Activated CD4-positive, alpha-beta T cell treated with anti-CD3 and anti-CD28 coated beads, Interleukin-2, amount 10 ng/mL, durations not matched to agents 24 days and 14 days (primary cell): ENCODE measurements at regions of chr10 and their contacts with region 1.

Region 1: GRCh38 chr10:31031558-31032257 is at the start of gene ZNF438:
- DNase-seq: peak; percentile 98
- H3K4me3 Mint-ChIP-seq: peak within 1 kb of the TSS; percentile 89
- H3K27ac Mint-ChIP-seq: peak within 1 kb of the TSS; percentile 98
- H3K4me1 Mint-ChIP-seq: peaks cover 9% of the 10 kb centered on the region
- H3K27me3 Mint-ChIP-seq: no peaks in the 10 kb centered on the region
- total RNA-seq, gene ZNF438: 2.4 and 3.2 TPM in 2 replicates

Region 2: DNA sequence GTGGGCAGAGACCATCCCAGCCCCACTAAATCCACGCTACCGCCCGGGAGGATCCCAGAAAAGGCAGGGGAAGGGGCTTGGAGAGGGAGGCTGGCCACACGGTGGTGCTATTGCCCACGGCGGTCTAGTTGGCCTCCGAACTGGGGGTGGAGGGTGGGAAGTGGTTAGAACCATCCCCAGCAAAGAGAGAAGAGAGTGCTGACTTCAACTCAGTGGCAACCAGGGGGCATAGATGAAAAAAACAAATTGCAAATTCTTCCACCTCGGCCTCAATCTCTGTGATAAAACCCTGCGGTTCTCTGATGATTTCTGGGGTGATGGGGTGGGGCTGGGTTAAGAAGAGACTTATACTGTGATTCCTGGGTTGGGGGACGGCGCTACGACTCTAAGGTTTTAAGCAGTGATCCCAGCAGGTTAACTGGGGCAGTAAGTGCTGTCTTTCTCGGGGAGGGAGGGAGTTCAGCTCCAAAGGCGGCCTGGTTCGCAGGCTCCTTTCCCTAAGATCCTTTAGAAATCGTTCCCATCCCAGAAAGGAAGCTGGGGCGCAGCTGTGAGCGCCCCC is 247.7 kb before region 1 on chr10:
- intact Hi-C with region 1: loop called (anchors 2 kb)
- DNase-seq: peak; percentile 94
- H3K4me3 Mint-ChIP-seq: peak overlapping the region; percentile 84
- H3K27ac Mint-ChIP-seq: peak overlapping the region; percentile 86
- H3K4me1 Mint-ChIP-seq: peaks cover 30% of the 10 kb centered on the region
- H3K27me3 Mint-ChIP-seq: peaks cover 2% of the 10 kb centered on the region

Region 3: DNA sequence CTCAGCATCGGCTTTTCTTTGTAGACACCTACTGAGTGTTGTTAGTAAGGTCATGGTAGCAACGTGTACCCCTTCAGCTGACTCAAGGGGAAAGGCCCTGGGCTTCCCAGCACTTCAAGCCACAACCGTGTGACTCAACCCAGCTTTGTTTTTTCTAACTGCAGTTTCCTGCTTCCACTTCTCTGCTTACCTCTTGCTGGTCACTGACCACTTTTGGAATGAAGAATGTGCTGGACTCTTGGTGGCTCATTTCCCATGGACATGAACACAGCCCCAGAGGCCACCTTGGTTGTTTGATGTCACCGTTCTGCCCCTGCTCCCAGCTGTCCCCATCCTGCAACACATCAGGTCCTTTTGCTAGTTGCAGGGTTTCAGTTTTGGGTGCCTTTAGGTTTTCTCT is 69.4 kb after region 1 on chr10:
- intact Hi-C with region 1: loop called (anchors 1 kb)
- DNase-seq: peak; percentile 89
- H3K4me3 Mint-ChIP-seq: peak overlapping the region; percentile 76
- H3K27ac Mint-ChIP-seq: peak overlapping the region; percentile 93
- H3K4me1 Mint-ChIP-seq: peaks cover 60% of the 10 kb centered on the region
- H3K27me3 Mint-ChIP-seq: no peaks in the 10 kb centered on the region

Region 4: DNA sequence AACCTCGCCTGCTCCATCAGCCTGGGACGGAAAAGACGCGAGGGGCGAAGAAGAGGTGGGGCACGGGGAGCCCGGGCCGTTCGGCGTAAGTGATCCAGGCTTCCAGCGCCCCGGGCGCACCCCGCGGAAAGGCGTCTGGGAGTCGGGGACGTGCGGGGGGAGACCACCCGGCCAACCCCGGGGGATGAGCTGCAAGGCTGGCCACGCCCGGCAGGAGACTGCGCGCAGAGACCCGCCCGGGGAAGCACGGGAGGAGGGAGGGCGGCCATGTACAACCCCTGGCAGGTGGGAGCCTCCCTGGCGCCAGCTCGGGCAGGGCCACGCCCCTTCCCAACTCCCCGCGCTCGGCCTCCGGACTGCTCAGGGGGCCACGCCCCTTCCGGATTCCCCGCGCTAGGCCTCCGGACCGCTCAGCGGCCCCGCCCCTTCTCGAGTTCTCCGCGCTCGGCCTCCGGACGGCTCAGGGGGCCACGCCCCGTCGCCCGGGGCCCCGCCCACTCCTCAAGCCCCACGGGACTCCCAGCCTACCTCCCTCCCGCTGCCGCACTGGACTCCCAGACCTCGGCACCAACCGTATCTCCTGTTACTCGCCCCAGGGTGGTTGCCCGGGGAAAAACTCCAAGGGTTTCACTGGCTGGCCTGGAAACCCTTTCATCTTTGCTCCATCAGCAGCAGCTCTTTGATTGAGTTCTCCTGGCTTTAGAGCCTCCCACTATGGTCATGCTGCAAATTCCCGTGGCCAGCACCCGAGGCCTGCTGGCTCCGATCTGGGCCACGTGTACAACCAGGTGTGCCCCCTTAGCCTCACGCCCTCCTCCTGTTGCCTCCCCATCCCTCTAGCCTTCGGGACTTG is 571.8 kb after region 1 on chr10:
- intact Hi-C with region 1: loop called (anchors 2 kb)
- DNase-seq: peak; percentile 95
- H3K4me3 Mint-ChIP-seq: peak overlapping the region; percentile 88
- H3K27ac Mint-ChIP-seq: no peak overlapping the region
- H3K4me1 Mint-ChIP-seq: peaks cover 26% of the 10 kb centered on the region
- H3K27me3 Mint-ChIP-seq: peaks cover 3% of the 10 kb centered on the region

Region 5: GRCh38 chr10:31808258-31809218 is 776.8 kb after region 1 on chr10:
- intact Hi-C with region 1: loop called (anchors 10 kb)
- DNase-seq: peak; percentile 71
- H3K4me3 Mint-ChIP-seq: peak overlapping the region; percentile 72
- H3K27ac Mint-ChIP-seq: peak overlapping the region; percentile 81
- H3K4me1 Mint-ChIP-seq: peaks cover 6% of the 10 kb centered on the region
- H3K27me3 Mint-ChIP-seq: no peaks in the 10 kb centered on the region